MCF 10A (cell line): ENCODE measurements at regions of chr4 and their contacts with region 1.

Region 1: DNA sequence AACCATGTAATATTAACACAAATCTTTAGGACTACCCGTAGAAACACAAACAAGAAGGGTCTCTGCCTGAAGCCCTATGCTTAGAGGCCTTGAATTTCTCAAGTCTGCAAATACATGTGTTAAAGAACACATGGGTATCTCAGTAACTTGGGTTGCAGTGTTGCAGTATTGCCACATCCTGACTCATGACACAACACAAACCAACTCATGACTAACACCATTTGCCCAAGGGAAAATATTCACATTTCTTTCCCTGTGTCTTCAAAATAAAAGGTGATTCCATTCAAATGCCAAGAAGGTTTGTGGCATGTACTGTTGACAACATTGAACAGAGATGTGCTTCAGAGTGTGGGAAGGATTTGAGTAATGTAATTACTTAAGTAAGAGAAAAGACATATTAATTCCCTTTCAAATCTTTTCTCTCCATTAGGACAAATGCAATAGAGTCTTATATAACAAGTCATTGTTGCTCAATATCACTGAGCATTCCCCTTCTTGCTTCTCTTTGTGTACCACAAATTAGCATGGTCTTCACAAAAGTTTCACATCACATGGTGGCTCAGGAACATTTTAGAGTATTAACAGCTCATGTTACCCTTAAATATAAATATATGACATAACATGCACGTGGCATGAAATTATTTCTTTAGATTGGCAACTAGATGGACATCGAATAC is 487.1 kb downstream of the STPG2 start:
- DNase-seq: peak; percentile 97
- H3K4me3 Mint-ChIP-seq: no peak overlapping the region
- H3K27ac Mint-ChIP-seq: peak overlapping the region; percentile 87
- H3K4me1 Mint-ChIP-seq: peaks cover 17% of the 10 kb centered on the region
- H3K27me3 Mint-ChIP-seq: no peaks in the 10 kb centered on the region
- CTCF ChIP-seq: no peak

Region 2: GRCh38 chr4:97498875-97499274 is 157.3 kb before region 1 on chr4:
- CTCF ChIA-PET with region 1: no interaction called
- POLR2A ChIA-PET with region 1: interaction called, 5 read pairs
- intact Hi-C with region 1: loop called (anchors 10 kb)
- DNase-seq: peak; percentile 95
- H3K4me3 Mint-ChIP-seq: no peak overlapping the region
- H3K27ac Mint-ChIP-seq: no peak overlapping the region
- H3K4me1 Mint-ChIP-seq: peaks cover 20% of the 10 kb centered on the region
- H3K27me3 Mint-ChIP-seq: no peaks in the 10 kb centered on the region
- CTCF ChIP-seq: no peak

Region 3: DNA sequence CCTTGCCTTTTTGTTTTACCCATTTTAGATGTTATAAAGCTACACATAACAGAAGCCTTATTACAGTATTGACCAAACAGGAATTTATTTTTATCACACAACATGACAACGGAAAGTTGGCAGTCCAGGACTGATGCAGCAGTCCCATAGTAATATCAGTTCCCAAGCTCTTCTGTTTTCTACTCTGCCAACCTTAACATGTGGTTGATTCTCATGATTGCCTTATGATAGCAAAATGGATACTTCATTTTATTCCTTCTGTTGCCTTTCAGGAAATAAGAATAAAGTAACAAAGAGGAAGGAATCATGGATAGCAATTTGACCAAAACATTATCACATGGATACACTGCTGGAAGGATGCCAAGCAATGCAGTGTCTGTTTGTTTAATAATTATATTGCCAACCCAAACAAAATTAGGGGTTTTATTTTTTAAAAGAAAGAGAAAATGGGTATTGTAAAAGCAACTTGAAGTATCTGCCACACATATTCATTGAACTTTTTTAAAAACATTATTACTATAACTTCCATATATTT is 211.4 kb after region 1 on chr4:
- CTCF ChIA-PET with region 1: no interaction called
- POLR2A ChIA-PET with region 1: no interaction called
- intact Hi-C with region 1: no loop called
- DNase-seq: peak; percentile 22
- H3K4me3 Mint-ChIP-seq: no peak overlapping the region
- H3K27ac Mint-ChIP-seq: no peak overlapping the region
- H3K4me1 Mint-ChIP-seq: no peaks in the 10 kb centered on the region
- H3K27me3 Mint-ChIP-seq: no peaks in the 10 kb centered on the region
- CTCF ChIP-seq: no peak